Body of pancreas (tissue), 4 donors: ENCODE measurements at regions of chr2 and their contacts with region 1.

Region 1: GRCh38 chr2:85288244-85288725 is 39.5 kb downstream of the TGOLN2 start:
- DNase-seq: no peak
- ATAC-seq: no peak
- H3K4me3 ChIP-seq: no peak overlapping the region
- H3K27ac ChIP-seq: no peak overlapping the region
- H3K4me1 ChIP-seq: no peaks in the 10 kb centered on the region
- H3K27me3 ChIP-seq: no peaks in the 10 kb centered on the region
- CTCF ChIP-seq: no peak
- POLR2A ChIP-seq: no peak

Region 2: GRCh38 chr2:84919885-84920580 is 368.3 kb before region 1 on chr2:
- intact Hi-C with region 1: loop called (anchors 10 kb)
- DNase-seq: peak in 1 of 4 donors; percentile 53
- ATAC-seq: peak; percentile 81
- H3K4me3 ChIP-seq: no peak overlapping the region
- H3K27ac ChIP-seq: peak overlapping the region in 3 of 4 donors; percentile 20 to 59 (median 20)
- H3K4me1 ChIP-seq: no peaks in the 10 kb centered on the region
- H3K27me3 ChIP-seq: no peaks in the 10 kb centered on the region
- CTCF ChIP-seq: no peak
- POLR2A ChIP-seq: no peak

Region 3: GRCh38 chr2:85066874-85067351 is 221.4 kb before region 1 on chr2:
- intact Hi-C with region 1: loop called (anchors 5 kb)
- DNase-seq: peak; percentile 70 to 83 (median 74)
- ATAC-seq: peak; percentile 83
- H3K4me3 ChIP-seq: no peak overlapping the region
- H3K27ac ChIP-seq: no peak overlapping the region
- H3K4me1 ChIP-seq: peaks cover 9% of the 10 kb centered on the region
- H3K27me3 ChIP-seq: no peaks in the 10 kb centered on the region
- CTCF ChIP-seq: peak; percentile 54 to 81 (median 73)
- POLR2A ChIP-seq: no peak

Region 4: GRCh38 chr2:85132834-85133637 is 155.2 kb before region 1 on chr2 and contains the start of gene TCF7L1:
- intact Hi-C with region 1: loop called (anchors 5 kb)
- DNase-seq: peak; percentile 72 to 88 (median 78)
- ATAC-seq: peak; percentile 85
- H3K4me3 ChIP-seq: peak within 1 kb of the TSS; percentile 54 to 58
- H3K27ac ChIP-seq: peak within 1 kb of the TSS in 2 of 4 donors; percentile 48 to 50
- H3K4me1 ChIP-seq: peaks cover 15% of the 10 kb centered on the region
- H3K27me3 ChIP-seq: no peaks in the 10 kb centered on the region
- CTCF ChIP-seq: peak; percentile 57 to 89 (median 77)
- POLR2A ChIP-seq: no peak
- total RNA-seq, gene TCF7L1: 2.1 to 4.3 TPM

Region 5: GRCh38 chr2:85504778-85505323 is 216.6 kb after region 1 on chr2:
- intact Hi-C with region 1: no loop called
- DNase-seq: peak in 3 of 4 donors; percentile 49 to 64 (median 55)
- ATAC-seq: peak; percentile 65
- H3K4me3 ChIP-seq: no peak overlapping the region
- H3K27ac ChIP-seq: no peak overlapping the region
- H3K4me1 ChIP-seq: peaks cover 16% of the 10 kb centered on the region
- H3K27me3 ChIP-seq: no peaks in the 10 kb centered on the region
- CTCF ChIP-seq: no peak
- POLR2A ChIP-seq: no peak